MCF 10A (cell line): ENCODE measurements at regions of chr2 and their contacts with region 1.

Region 1: DNA sequence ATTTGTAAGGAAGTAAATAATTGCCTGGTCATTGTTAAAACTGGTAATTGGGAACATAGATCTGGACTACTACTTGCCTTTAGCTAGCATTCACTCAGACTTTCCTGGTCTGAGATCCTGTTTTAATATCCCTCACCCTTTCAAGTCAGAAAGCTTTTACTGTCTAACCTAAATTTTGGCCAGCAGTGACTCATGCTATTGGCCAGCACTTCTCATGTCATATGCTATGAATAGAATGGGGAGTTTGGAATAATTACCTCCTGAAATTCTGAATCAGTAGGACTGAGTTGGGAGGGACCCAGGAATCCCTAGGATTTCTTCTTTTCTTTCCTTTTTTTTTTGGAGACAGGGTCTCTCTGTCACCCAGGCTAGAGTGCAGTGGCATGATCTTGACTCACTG is 19.3 kb downstream of the STK36 start:
- DNase-seq: no peak
- H3K4me3 Mint-ChIP-seq: no peak overlapping the region
- H3K27ac Mint-ChIP-seq: no peak overlapping the region
- H3K4me1 Mint-ChIP-seq: peaks cover 6% of the 10 kb centered on the region
- H3K27me3 Mint-ChIP-seq: no peaks in the 10 kb centered on the region
- CTCF ChIP-seq: no peak

Region 2: GRCh38 chr2:218406209-218406948 is 284.9 kb before region 1 on chr2:
- CTCF ChIA-PET with region 1: no interaction called
- POLR2A ChIA-PET with region 1: no interaction called
- intact Hi-C with region 1: loop called (anchors 2 kb)
- DNase-seq: peak; percentile 94
- H3K4me3 Mint-ChIP-seq: peak overlapping the region; percentile 67
- H3K27ac Mint-ChIP-seq: peak overlapping the region; percentile 82
- H3K4me1 Mint-ChIP-seq: peaks cover 17% of the 10 kb centered on the region
- H3K27me3 Mint-ChIP-seq: no peaks in the 10 kb centered on the region
- CTCF ChIP-seq: peak; percentile 82

Region 3: GRCh38 chr2:218671654-218672566 is 19.3 kb before region 1 on chr2 and contains the starts of genes RNF25 and STK36:
- CTCF ChIA-PET with region 1: interaction called, 44 read pairs
- POLR2A ChIA-PET with region 1: interaction called, 14 read pairs
- intact Hi-C with region 1: no loop called
- DNase-seq: peak; percentile 66
- H3K4me3 Mint-ChIP-seq: peak within 1 kb of the TSS; percentile 96
- H3K27ac Mint-ChIP-seq: peak within 1 kb of the TSS; percentile 97
- H3K4me1 Mint-ChIP-seq: peaks cover 18% of the 10 kb centered on the region
- H3K27me3 Mint-ChIP-seq: no peaks in the 10 kb centered on the region
- CTCF ChIP-seq: no peak
- total RNA-seq, gene RNF25: 58.9 and 60.8 TPM in 2 replicates
- total RNA-seq, gene STK36: 20.7 and 35.1 TPM in 2 replicates

Region 4: GRCh38 chr2:218701806-218702205 is 10.6 kb after region 1 on chr2:
- CTCF ChIA-PET with region 1: interaction called, 16 read pairs
- POLR2A ChIA-PET with region 1: no interaction called
- intact Hi-C with region 1: no loop called
- DNase-seq: no peak
- H3K4me3 Mint-ChIP-seq: no peak overlapping the region
- H3K27ac Mint-ChIP-seq: no peak overlapping the region
- H3K4me1 Mint-ChIP-seq: no peaks in the 10 kb centered on the region
- H3K27me3 Mint-ChIP-seq: no peaks in the 10 kb centered on the region
- CTCF ChIP-seq: no peak

Region 5: GRCh38 chr2:218710687-218711549 is 19.7 kb after region 1 on chr2 and contains the start of gene TTLL4:
- CTCF ChIA-PET with region 1: interaction called, 24 read pairs
- POLR2A ChIA-PET with region 1: interaction called, 3 read pairs
- intact Hi-C with region 1: no loop called
- DNase-seq: peak; percentile 97
- H3K4me3 Mint-ChIP-seq: peak within 1 kb of the TSS; percentile 98
- H3K27ac Mint-ChIP-seq: peak within 1 kb of the TSS; percentile 92
- H3K4me1 Mint-ChIP-seq: peaks cover 15% of the 10 kb centered on the region
- H3K27me3 Mint-ChIP-seq: no peaks in the 10 kb centered on the region
- CTCF ChIP-seq: peak; percentile 70
- total RNA-seq, gene TTLL4: 33.6 and 38.2 TPM in 2 replicates

Region 6: GRCh38 chr2:218717262-218717661 is 26.0 kb after region 1 on chr2:
- CTCF ChIA-PET with region 1: interaction called, 10 read pairs
- POLR2A ChIA-PET with region 1: interaction called, 3 read pairs
- intact Hi-C with region 1: no loop called
- DNase-seq: peak; percentile 52
- H3K4me3 Mint-ChIP-seq: no peak overlapping the region
- H3K27ac Mint-ChIP-seq: peak overlapping the region; percentile 27
- H3K4me1 Mint-ChIP-seq: peaks cover 23% of the 10 kb centered on the region
- H3K27me3 Mint-ChIP-seq: no peaks in the 10 kb centered on the region
- CTCF ChIP-seq: no peak

Region 7: DNA sequence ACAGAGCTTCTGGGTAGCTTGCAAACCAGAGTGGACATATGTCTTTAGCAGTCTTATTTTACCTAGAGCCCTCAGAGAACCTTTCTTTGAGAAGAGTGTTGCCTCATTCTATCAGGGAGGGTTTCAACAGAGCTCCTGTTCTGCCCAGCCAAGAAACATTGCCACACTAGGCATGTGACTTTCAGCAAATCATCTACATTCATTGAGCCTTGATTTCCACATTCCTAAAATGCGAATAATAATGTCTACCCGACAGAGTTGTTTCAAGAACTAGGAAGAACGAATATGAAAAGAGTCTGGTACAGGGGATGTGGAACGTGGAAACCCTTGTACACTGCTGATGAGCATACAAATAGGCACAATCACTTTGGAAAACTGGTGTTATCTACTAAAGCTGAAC is 148.2 kb after region 1 on chr2:
- CTCF ChIA-PET with region 1: interaction called, 10 read pairs
- POLR2A ChIA-PET with region 1: interaction called, 3 read pairs
- intact Hi-C with region 1: no loop called
- DNase-seq: peak; percentile 61
- H3K4me3 Mint-ChIP-seq: no peak overlapping the region
- H3K27ac Mint-ChIP-seq: no peak overlapping the region
- H3K4me1 Mint-ChIP-seq: peaks cover 10% of the 10 kb centered on the region
- H3K27me3 Mint-ChIP-seq: peaks cover 21% of the 10 kb centered on the region
- CTCF ChIP-seq: no peak